ENCODE measurements at regions of chr16 and their contacts with region 1.

Region 1: DNA sequence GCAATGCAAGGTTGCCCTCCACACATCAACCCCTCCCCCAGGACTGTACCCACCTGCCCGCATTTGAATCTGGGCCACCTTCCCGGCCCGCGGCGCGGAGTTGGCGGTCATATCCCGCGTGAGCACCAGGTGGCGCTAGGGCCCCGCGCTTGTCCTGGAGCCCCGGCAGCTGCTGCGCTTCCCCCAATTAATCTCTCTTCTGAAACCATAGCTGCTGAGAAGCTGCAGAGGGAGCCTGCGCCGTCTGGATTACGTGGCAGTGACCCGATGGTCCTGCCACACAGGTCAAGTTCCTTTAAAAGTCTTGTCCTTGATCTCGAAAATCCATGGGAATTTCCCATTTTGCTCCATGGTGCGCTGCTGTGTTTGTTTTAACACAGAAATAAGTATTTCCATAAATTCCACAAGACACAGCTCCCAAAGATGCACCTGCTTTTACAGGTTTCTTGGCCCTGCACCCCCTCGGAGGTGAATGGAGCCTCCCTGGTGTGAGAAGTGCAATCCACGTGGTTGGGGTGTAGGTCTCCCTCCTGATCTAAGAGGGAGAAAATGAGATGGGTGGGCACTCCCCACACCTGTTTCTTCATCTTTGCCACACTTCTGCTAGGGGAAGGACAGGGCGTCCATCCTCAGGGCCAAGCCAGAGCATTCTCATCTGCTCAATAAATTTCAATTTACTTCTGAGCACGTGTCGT is 22.1 kb downstream of the COX4I1 start:
- DNase-seq: peak; percentile 91
- H3K4me3 ChIP-seq: peak overlapping the region in 1 of 2 experiments; percentile 25; a peak in 1 of 4 replicates
- H3K27ac ChIP-seq: no peak overlapping the region
- H3K4me1 ChIP-seq: no peaks in the 10 kb centered on the region
- H3K27me3 ChIP-seq: peaks cover 52% of the 10 kb centered on the region
- CTCF ChIP-seq: peak; percentile 89
- EP300 ChIP-seq: no peak
- RAD21 ChIP-seq: peak; percentile 91

Region 2: GRCh38 chr16:85798901-85799496 is 22.6 kb before region 1 on chr16:
- CTCF ChIA-PET with region 1: interaction called, 13 read pairs
- POLR2A ChIA-PET with region 1: no interaction called
- DNase-seq: peak; percentile 84
- H3K4me3 ChIP-seq: peak overlapping the region; percentile 88 to 96
- H3K27ac ChIP-seq: peak overlapping the region; percentile 66 to 69; a peak in 3 of 4 replicates
- H3K4me1 ChIP-seq: peaks cover 14 to 15% of the 10 kb centered on the region in 2 experiments; a peak in 2 of 4 replicates
- H3K27me3 ChIP-seq: no peaks in the 10 kb centered on the region
- CTCF ChIP-seq: peak; percentile 15
- EP300 ChIP-seq: no peak
- RAD21 ChIP-seq: no peak

Region 3: GRCh38 chr16:85891033-85891772 is 69.6 kb after region 1 on chr16:
- CTCF ChIA-PET with region 1: interaction called, 13 read pairs
- POLR2A ChIA-PET with region 1: no interaction called
- DNase-seq: no peak
- H3K4me3 ChIP-seq: no peak overlapping the region
- H3K27ac ChIP-seq: no peak overlapping the region
- H3K4me1 ChIP-seq: peaks cover 0 to 3% of the 10 kb centered on the region in 2 experiments; a peak in 1 of 4 replicates
- H3K27me3 ChIP-seq: peaks cover 69% of the 10 kb centered on the region
- CTCF ChIP-seq: no peak
- EP300 ChIP-seq: no peak
- RAD21 ChIP-seq: no peak

Region 4: GRCh38 chr16:85986931-85987749 is 165.6 kb after region 1 on chr16:
- CTCF ChIA-PET with region 1: interaction called, 50 read pairs
- POLR2A ChIA-PET with region 1: no interaction called
- DNase-seq: peak; percentile 78
- H3K4me3 ChIP-seq: peak overlapping the region; percentile 33 to 51; a peak in 3 of 4 replicates
- H3K27ac ChIP-seq: no peak overlapping the region
- H3K4me1 ChIP-seq: no peaks in the 10 kb centered on the region
- H3K27me3 ChIP-seq: peaks cover 96% of the 10 kb centered on the region
- CTCF ChIP-seq: peak; percentile 36
- EP300 ChIP-seq: no peak
- RAD21 ChIP-seq: peak; percentile 16; the same call in 1 of the 2 replicates

Region 5: GRCh38 chr16:86016201-86016871 is 194.7 kb after region 1 on chr16:
- CTCF ChIA-PET with region 1: interaction called, 94 read pairs
- POLR2A ChIA-PET with region 1: no interaction called
- DNase-seq: peak; percentile 73
- H3K4me3 ChIP-seq: no peak overlapping the region
- H3K27ac ChIP-seq: no peak overlapping the region
- H3K4me1 ChIP-seq: no peaks in the 10 kb centered on the region
- H3K27me3 ChIP-seq: peaks cover 5% of the 10 kb centered on the region; the same call in 1 of the 2 replicates
- CTCF ChIP-seq: peak; percentile 75
- EP300 ChIP-seq: no peak
- RAD21 ChIP-seq: peak; percentile 88

Region 6: GRCh38 chr16:86519649-86520316 is 698.2 kb after region 1 on chr16:
- CTCF ChIA-PET with region 1: interaction called, 35 read pairs
- POLR2A ChIA-PET with region 1: no interaction called
- DNase-seq: peak; percentile 82
- H3K4me3 ChIP-seq: peak overlapping the region in 1 of 2 experiments; percentile 38; a peak in 2 of 4 replicates
- H3K27ac ChIP-seq: no peak overlapping the region
- H3K4me1 ChIP-seq: no peaks in the 10 kb centered on the region
- H3K27me3 ChIP-seq: peaks cover 82% of the 10 kb centered on the region
- CTCF ChIP-seq: peak; percentile 89
- EP300 ChIP-seq: no peak
- RAD21 ChIP-seq: peak; percentile 71

Measured in SK-N-SH (cell line).